Breast epithelium (tissue), 4 donors: ENCODE measurements at regions of chr13 and their contacts with region 1.

Region 1: DNA sequence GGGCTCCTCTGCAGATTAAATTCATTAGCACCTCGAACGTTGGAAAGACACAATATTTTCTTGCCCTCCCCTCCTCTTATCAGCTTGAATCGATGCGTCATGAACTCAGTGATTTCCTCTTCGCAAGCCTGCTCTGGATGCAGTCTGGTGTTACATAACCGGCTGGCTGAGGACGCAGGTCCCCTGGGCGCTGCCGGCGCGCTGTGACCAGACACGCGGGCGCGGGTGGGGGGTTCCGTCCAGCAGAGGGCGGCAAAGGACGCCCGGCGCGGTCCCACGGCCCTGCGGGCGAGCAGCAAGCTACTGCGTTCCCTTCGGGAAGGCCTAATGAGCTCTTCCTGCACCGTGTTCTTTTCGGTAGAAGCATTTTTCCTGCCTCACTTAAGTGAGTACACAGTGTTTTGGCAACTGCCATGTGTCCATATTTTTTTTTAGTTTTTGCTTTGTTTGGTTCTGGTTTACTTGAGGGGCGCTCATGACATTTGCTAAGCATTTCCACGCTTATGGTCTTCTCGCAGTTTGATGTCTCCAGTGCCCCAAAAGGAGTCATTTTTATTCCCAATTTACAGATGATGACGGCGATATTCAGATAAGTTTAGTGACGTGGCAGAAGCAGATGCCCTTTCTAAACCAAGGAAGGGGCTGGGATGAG is 112.2 kb upstream of the MBNL2 start:
- DNase-seq: peak; percentile 80 to 92
- H3K4me3 ChIP-seq: peak overlapping the region in 2 of 3 donors; percentile 18 to 34
- H3K27ac ChIP-seq: peak overlapping the region; percentile 1 to 50
- H3K4me1 ChIP-seq: no peaks in the 10 kb centered on the region
- H3K27me3 ChIP-seq: no peaks in the 10 kb centered on the region
- CTCF ChIP-seq: peak; percentile 92 to 97 (median 93)
- POLR2A ChIP-seq: no peak

Region 2: GRCh38 chr13:97221989-97222700 is 112.2 kb after region 1 on chr13 and contains the start of gene MBNL2:
- intact Hi-C with region 1: loop called (anchors 10 kb)
- DNase-seq: peak; percentile 90 to 93
- H3K4me3 ChIP-seq: peak within 1 kb of the TSS; percentile 57 to 85 (median 65)
- H3K27ac ChIP-seq: peak within 1 kb of the TSS; percentile 89 to 94
- H3K4me1 ChIP-seq: peaks cover 4 to 9% of the 10 kb centered on the region in 2 donors
- H3K27me3 ChIP-seq: no peaks in the 10 kb centered on the region
- CTCF ChIP-seq: no peak
- POLR2A ChIP-seq: peak; percentile 83
- total RNA-seq, gene MBNL2: 68.5 to 131 (median 120) TPM

Region 3: DNA sequence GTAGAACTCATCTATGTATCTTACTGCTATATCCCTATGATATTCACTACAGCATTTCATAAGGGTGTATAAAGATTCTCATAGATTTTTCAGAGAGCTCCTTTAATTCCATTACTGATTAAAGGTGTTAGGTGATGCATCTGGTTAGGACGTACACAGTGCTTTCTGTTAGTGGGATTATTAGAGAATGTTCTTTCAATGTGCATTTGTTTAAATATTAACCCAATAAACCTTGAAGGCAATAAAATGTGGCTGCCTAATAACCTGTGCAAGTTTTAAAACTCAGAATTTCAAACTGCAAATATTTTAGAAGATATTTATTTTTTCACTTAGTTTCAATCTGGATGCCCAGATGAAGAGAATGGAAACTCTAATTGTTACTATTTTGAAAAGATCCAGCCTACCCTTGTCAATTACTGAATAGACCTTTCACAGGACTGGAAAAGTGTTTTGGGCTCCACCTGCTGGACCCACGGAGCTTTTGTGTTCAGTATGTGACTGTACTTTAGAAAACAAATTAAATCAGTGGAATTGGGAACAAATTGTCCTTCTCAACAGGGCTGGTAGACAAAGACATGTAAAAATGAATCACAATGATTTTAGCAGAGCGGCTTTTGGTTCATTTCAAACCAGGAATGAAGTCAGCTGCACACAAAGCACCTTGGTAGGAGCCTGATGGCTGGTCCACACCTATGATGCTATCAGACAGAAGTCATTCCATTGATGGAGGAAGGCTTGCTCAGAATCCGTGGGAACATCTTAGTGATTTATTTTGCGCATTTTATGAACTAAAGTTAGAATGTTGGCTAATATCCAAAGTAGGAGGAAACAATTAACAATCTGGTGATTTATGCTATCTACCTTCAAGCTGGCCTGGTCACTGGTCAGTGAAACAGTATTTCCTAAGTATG is 234.6 kb after region 1 on chr13:
- intact Hi-C with region 1: loop called (anchors 10 kb)
- DNase-seq: peak in 1 of 2 donors; percentile 59
- H3K4me3 ChIP-seq: no peak overlapping the region
- H3K27ac ChIP-seq: peak overlapping the region; percentile 30 to 41
- H3K4me1 ChIP-seq: no peaks in the 10 kb centered on the region
- H3K27me3 ChIP-seq: no peaks in the 10 kb centered on the region
- CTCF ChIP-seq: peak in 2 of 3 donors; percentile 59 to 78
- POLR2A ChIP-seq: no peak